ENCODE measurements at regions of chr6 and their contacts with region 1.

Region 1: DNA sequence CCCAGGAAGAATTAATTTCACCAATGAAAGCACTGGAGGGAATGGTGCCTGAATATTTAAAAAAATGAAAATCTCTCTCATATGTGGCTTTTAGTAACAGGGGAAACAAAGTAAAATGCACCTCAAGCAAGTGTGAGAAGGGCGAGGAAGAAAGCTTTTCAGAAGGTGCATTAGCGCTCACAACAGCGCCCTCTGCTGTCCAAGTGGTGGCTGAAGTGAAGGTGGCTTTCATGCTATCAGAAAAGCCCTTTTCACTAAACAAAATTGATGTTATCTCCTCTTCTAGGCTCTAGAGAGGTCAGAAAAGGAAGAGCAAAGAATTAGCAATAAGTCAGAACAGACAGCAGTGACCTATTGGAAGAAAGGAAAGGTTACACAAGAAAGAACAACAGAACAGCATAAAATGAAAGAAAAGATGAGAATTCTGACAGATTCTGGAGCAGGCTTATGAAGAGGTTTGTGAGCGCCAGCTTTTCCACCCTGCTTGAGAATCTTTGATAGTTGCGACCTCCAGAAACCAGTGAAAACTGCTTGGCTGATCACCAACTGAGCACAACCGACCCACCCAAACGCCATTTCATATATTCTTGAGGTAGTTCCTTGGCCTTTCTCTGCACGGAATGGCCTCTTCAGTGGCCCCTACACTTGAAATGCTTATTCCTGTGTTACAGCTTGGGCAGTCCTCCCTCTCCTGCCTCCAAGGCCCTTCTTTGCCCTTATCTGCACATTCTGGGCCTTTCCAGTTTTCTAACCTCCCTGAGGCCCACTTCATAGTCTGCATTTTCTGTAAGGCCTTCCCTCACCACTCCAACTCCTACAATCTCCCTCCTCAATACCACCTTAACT is 45.3 kb downstream of the SMLR1 start:
- DNase-seq: no peak
- H3K4me3 ChIP-seq: no peak overlapping the region
- H3K27me3 ChIP-seq: no peaks in the 10 kb centered on the region
- CTCF ChIP-seq: peak; percentile 96

Region 2: GRCh38 chr6:130322673-130323268 is 549.7 kb before region 1 on chr6:
- CTCF ChIA-PET with region 1: interaction called, 14 read pairs
- POLR2A ChIA-PET with region 1: no interaction called
- DNase-seq: no peak
- H3K4me3 ChIP-seq: no peak overlapping the region
- H3K27me3 ChIP-seq: no peaks in the 10 kb centered on the region
- CTCF ChIP-seq: peak; percentile 91

Region 3: DNA sequence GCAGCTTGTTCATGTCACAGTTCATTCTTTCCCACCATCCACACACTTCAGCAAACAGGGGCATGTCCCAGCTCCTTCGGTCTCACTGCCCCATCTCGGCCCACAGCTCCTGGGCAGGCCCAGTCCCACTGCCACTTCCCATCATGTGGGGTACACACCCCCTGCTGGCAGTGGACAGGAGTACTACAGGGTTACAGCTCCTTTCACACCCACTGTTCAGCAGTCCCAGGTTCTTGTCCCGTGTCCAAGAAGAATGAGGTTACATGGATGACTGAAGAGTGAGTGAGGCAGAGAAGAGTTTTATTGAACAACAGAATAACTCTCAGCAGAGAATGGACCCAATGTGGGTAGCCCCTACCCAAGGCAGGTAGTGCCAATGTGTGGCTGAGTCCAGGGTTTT is 123.1 kb before region 1 on chr6:
- CTCF ChIA-PET with region 1: no interaction called
- POLR2A ChIA-PET with region 1: no interaction called
- DNase-seq: no peak
- H3K4me3 ChIP-seq: no peak overlapping the region
- H3K27me3 ChIP-seq: no peaks in the 10 kb centered on the region
- CTCF ChIP-seq: 0 out of 2 replicates have a peak, but pooled peaks have one; percentile 7

Region 4: GRCh38 chr6:130858498-130859160 is 13.8 kb before region 1 on chr6:
- CTCF ChIA-PET with region 1: interaction called, 28 read pairs
- POLR2A ChIA-PET with region 1: no interaction called
- DNase-seq: no peak
- H3K4me3 ChIP-seq: no peak overlapping the region
- H3K27me3 ChIP-seq: no peaks in the 10 kb centered on the region
- CTCF ChIP-seq: no peak